ENCODE measurements at regions of chr22 and their contacts with region 1.

Region 1: GRCh38 chr22:28424427-28425080 is 255.1 kb downstream of the TTC28 start:
- DNase-seq: peak; percentile 89
- H3K4me3 ChIP-seq: no peak overlapping the region
- H3K27ac ChIP-seq: no peak overlapping the region
- H3K27me3 ChIP-seq: no peaks in the 10 kb centered on the region
- CTCF ChIP-seq: no peak

Region 2: GRCh38 chr22:28395920-28396753 is 28.4 kb before region 1 on chr22:
- CTCF ChIA-PET with region 1: interaction called, 3 read pairs
- POLR2A ChIA-PET with region 1: interaction called, 10 read pairs
- DNase-seq: no peak
- H3K4me3 ChIP-seq: no peak overlapping the region
- H3K27ac ChIP-seq: peak overlapping the region; percentile 4
- H3K27me3 ChIP-seq: no peaks in the 10 kb centered on the region
- CTCF ChIP-seq: no peak